ENCODE measurements at regions of chr19 and their contacts with region 1.

Region 1: GRCh38 chr19:32287811-32288227 is 57.6 kb upstream of the ZNF507 start:
- DNase-seq: peak; percentile 62 to 66
- H3K4me3 ChIP-seq: no peak overlapping the region
- H3K27ac ChIP-seq: peak overlapping the region in 1 of 2 donors; percentile 10
- H3K4me1 ChIP-seq: peaks cover 0 to 3% of the 10 kb centered on the region in 2 donors
- H3K27me3 ChIP-seq: no peaks in the 10 kb centered on the region
- CTCF ChIP-seq: peak; percentile 31 to 61 (median 40)
- POLR2A ChIP-seq: no peak

Region 2: DNA sequence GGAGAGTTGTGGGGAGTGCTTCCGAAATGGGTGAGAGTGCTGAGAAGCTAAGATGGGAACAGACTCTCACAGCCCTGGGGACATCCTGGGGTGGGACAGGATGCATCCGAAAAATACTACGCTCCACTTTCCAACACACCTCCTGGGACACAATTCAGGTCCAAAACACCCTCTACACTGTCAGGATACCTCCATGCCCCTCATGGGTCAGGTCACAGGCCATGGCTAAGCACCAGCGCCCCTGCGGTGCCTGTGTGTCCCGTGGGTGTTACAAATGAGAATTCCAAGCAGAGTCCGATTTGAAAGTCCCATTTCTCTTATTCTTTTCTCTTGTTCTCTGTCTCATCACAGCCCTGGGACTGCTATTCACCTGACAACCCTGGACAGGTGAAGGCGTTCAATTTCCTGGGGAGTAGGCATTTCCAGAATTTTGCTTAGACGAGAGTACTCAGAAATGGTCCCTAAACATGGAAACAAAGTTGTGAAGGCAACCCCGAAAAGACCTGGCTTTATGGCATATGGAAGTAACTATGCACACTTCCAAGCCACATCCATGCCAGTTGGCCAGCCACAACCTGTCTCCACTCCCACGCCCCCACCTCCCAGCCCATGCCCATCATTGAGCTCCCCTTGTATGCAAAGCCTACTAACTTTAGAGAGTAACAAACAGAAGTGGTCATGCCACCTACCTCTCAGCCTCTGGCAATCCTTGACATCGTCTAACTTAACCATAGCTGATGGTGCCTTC is 30.3 kb before region 1 on chr19:
- intact Hi-C with region 1: loop called (anchors 1 kb)
- DNase-seq: no peak
- H3K4me3 ChIP-seq: no peak overlapping the region
- H3K27ac ChIP-seq: no peak overlapping the region
- H3K4me1 ChIP-seq: no peaks in the 10 kb centered on the region
- H3K27me3 ChIP-seq: no peaks in the 10 kb centered on the region
- CTCF ChIP-seq: no peak
- POLR2A ChIP-seq: no peak

Region 3: GRCh38 chr19:32498648-32499200 is 210.9 kb after region 1 on chr19:
- intact Hi-C with region 1: no loop called
- DNase-seq: no peak
- H3K4me3 ChIP-seq: no peak overlapping the region
- H3K27ac ChIP-seq: no peak overlapping the region
- H3K4me1 ChIP-seq: no peaks in the 10 kb centered on the region
- H3K27me3 ChIP-seq: no peaks in the 10 kb centered on the region
- CTCF ChIP-seq: no peak
- POLR2A ChIP-seq: no peak

Measured in uterus (tissue), 4 donors.